ENCODE measurements at regions of chr11 and their contacts with region 1.

Region 1: DNA sequence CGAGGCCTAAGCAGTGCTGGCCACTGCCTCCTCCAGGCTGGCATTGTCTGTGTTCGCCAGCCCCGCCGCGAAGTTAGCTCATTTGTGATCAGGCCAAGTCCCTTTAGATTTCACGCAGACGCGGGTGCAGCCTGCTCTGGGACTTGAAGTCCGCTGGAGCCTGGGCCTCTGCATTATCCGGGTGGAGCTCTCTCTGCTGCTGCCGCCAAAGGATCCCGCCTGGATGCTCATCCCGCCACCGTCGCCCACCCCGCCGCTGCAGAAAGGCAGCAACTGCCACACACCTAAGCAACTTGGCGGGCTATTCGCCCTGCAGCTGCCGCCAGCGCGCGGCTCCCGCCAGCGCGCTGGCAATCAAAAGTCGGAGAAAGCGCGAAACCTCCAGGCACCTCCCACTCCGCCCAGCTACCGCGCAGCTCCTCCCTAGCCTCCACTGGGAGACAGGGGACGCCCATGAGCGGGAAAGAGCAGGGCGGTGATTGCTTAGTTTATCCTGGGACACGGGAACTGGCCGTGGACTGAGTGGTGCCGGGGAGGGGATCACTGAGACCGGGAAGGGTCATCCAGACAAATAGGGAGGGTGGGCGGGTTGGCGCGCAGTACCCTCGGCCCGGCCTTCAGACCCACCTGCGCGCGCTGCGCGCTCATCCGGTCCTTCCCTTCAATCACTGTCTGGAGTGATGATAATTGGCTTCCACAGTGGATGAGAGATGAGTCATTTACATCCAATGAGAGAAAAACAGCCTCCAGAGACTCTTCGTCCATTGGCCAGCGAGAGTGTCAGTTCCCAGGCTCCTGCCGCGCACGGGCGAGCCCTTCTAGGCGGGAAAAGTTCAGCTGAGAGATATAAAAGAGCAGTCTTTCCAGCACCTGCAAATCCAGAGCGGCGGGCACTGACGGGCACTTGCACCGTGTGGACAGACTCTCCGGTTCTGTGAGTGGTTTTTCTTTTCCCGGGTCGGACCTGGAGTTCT is at the start of gene FAM111B:
- DNase-seq: peak; percentile 88
- H3K4me3 Mint-ChIP-seq: peak within 1 kb of the TSS; percentile 87
- H3K27ac Mint-ChIP-seq: peak within 1 kb of the TSS; percentile 76
- H3K4me1 Mint-ChIP-seq: peaks cover 41% of the 10 kb centered on the region
- H3K27me3 Mint-ChIP-seq: peaks cover 61% of the 10 kb centered on the region
- total RNA-seq, gene FAM111B: 21.6 to 22.6 TPM

Region 2: GRCh38 chr11:58958500-58958899 is 148.2 kb before region 1 on chr11:
- CTCF ChIA-PET with region 1: no interaction called
- intact Hi-C with region 1: loop called (anchors 1 kb)
- DNase-seq: peak; percentile 62
- H3K4me3 Mint-ChIP-seq: no peak overlapping the region
- H3K27ac Mint-ChIP-seq: no peak overlapping the region
- H3K4me1 Mint-ChIP-seq: peaks cover 8% of the 10 kb centered on the region
- H3K27me3 Mint-ChIP-seq: peaks cover 6% of the 10 kb centered on the region

Region 3: DNA sequence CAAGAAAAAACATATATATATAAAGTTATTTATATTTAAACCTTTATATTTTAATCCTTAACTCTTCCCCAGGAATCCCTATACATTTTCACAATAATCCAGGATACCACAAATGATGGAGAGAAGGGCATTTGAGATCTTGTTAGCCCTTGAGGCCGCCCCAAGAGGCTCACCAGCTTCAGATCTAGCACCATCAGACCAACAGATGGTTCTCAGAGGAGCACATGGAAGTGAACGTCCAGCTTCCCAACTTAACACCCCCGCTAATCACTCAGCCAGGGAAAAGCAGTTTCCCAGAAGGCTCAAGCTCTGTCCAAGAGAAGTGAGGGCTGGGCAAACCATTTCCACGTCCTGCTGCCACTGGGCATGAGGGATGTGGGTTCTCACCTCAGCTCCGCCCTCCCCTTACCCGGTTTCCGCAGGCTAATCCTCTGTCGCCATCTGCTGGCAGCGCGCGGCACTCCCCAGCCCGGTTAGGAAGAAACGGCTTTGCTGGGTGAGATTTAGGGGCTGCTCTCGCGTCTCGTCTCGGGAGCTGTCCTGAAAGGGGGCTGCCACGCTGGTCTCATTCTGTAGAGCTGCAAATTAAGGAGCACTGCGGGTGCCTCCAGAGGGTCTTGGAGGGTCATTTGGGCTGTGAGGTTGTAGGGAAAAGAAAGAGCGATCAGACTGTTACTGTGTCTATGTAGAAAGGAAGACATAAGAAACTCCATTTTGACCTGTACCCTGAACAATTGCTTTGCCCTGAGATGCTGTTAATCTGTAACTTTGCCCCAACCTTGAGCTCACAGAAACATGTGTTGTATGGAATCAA is 29.2 kb after region 1 on chr11:
- CTCF ChIA-PET with region 1: interaction called, 27 read pairs
- intact Hi-C with region 1: no loop called
- DNase-seq: peak; percentile 93
- H3K4me3 Mint-ChIP-seq: peak overlapping the region; percentile 26
- H3K27ac Mint-ChIP-seq: no peak overlapping the region
- H3K4me1 Mint-ChIP-seq: peaks cover 6% of the 10 kb centered on the region
- H3K27me3 Mint-ChIP-seq: no peaks in the 10 kb centered on the region

Region 4: GRCh38 chr11:59152312-59152951 is 45.8 kb after region 1 on chr11:
- CTCF ChIA-PET with region 1: interaction called, 9 read pairs
- intact Hi-C with region 1: loop called (anchors 2 kb)
- DNase-seq: peak; percentile 71
- H3K4me3 Mint-ChIP-seq: peak overlapping the region; percentile 53
- H3K27ac Mint-ChIP-seq: peak overlapping the region; percentile 91
- H3K4me1 Mint-ChIP-seq: peaks cover 38% of the 10 kb centered on the region
- H3K27me3 Mint-ChIP-seq: no peaks in the 10 kb centered on the region

Region 5: GRCh38 chr11:59501931-59502330 is 395.3 kb after region 1 on chr11:
- CTCF ChIA-PET with region 1: no interaction called
- intact Hi-C with region 1: no loop called
- DNase-seq: no peak
- H3K4me3 Mint-ChIP-seq: no peak overlapping the region
- H3K27ac Mint-ChIP-seq: no peak overlapping the region
- H3K4me1 Mint-ChIP-seq: peaks cover 6% of the 10 kb centered on the region
- H3K27me3 Mint-ChIP-seq: peaks cover 4% of the 10 kb centered on the region

Region 6: GRCh38 chr11:59560702-59561469 is 454.2 kb after region 1 on chr11:
- CTCF ChIA-PET with region 1: no interaction called
- intact Hi-C with region 1: loop called (anchors 5 kb)
- DNase-seq: peak; percentile 90
- H3K4me3 Mint-ChIP-seq: peak overlapping the region; percentile 93
- H3K27ac Mint-ChIP-seq: peak overlapping the region; percentile 97
- H3K4me1 Mint-ChIP-seq: peaks cover 47% of the 10 kb centered on the region
- H3K27me3 Mint-ChIP-seq: peaks cover 4% of the 10 kb centered on the region

Measured in activated naive CD4-positive, alpha-beta T cell treated with anti-CD3 and anti-CD28 coated beads for 36 hours (primary cell).